ENCODE measurements at regions of chr3 and their contacts with region 1.

Region 1: DNA sequence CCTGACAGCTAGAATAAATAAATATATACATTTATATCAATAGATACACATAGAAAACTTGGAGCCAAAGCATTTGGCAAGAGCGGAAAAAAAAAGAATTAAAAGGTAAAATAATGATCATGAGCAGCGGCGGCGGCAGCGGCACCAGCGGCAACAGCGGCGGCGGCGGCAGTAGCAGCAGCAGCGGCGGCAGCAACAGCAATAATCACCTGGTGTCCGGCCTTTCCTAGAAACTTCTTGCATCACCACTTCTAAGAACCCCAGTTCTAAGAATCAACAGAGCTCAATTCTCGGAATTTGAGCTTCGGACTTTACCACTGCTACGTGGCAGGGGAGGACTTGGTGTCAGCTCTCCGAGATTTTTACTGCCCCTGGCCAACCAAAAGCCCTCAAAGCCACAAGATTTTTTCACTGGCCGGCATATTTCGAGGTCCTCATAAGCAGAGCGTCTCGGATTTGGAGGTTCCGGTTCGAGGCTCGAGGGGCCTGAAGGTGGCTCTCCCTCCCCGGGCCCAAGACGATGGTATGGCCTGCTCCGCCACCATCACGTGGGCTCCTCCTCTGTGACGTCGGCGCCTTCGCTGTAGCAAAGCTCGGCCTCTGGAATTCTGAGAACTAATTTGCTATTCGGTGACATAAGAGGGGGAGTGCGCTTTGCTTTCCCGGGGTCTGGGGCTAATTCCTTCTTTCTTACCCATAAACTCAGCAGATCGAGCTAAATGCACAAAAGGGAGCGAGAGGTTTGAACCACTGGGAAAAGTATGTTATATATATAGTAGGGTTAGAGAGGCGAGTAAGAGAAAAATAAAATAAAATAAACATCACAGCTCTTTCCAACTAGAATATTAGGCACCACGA is at the start of gene BCL6:
- DNase-seq: peak; percentile 98
- H3K4me3 ChIP-seq: peak within 1 kb of the TSS; percentile 67 to 98 (median 78)
- H3K27ac ChIP-seq: peak within 1 kb of the TSS; percentile 100
- H3K4me1 ChIP-seq: peaks cover 37% of the 10 kb centered on the region
- H3K27me3 ChIP-seq: no peaks in the 10 kb centered on the region
- CTCF ChIP-seq: peak; percentile 2 to 6
- total RNA-seq, gene BCL6: 14.0 to 26.8 TPM

Region 2: GRCh38 chr3:187807086-187807862 is 61.8 kb after region 1 on chr3:
- CTCF ChIA-PET with region 1: no interaction called
- dilution Hi-C with region 1: loop called (anchors 5 kb)
- in situ Hi-C with region 1: no loop called
- intact Hi-C with region 1: no loop called
- DNase-seq: peak; percentile 85
- H3K4me3 ChIP-seq: no peak overlapping the region
- H3K27ac ChIP-seq: no peak overlapping the region
- H3K4me1 ChIP-seq: peaks cover 43% of the 10 kb centered on the region
- H3K27me3 ChIP-seq: no peaks in the 10 kb centered on the region
- CTCF ChIP-seq: no peak

Region 3: GRCh38 chr3:188049606-188050530 is 304.4 kb after region 1 on chr3:
- CTCF ChIA-PET with region 1: no interaction called
- dilution Hi-C with region 1: loop called (anchors 25 kb)
- in situ Hi-C with region 1: loop called in 1 of 2 experiments (anchors 10 kb)
- intact Hi-C with region 1: no loop called
- DNase-seq: no peak
- H3K4me3 ChIP-seq: no peak overlapping the region
- H3K27ac ChIP-seq: no peak overlapping the region
- H3K4me1 ChIP-seq: peaks cover 19% of the 10 kb centered on the region
- H3K27me3 ChIP-seq: no peaks in the 10 kb centered on the region
- CTCF ChIP-seq: no peak

Region 4: DNA sequence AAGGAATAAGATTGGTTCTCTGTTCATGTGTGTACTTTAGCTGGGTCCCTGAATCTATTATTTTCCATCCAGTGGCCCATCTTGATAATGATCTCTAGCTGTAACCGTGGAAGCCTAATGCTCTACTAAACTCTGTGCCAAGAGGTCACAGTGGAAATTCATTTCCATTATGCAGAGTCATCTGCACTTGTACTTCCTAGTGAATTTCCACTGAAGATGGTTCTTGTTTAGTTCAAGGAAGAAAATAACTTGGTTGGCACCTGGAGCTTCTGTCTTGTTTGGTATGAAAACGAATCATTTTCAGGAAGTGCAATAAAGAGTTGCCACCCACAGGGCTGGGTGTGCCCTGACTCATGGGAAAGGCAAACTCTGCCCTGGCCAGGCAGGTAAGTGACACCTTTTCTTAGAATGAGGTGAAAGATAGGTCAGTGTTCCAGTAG is 418.8 kb after region 1 on chr3:
- CTCF ChIA-PET with region 1: no interaction called
- dilution Hi-C with region 1: loop called (anchors 25 kb)
- in situ Hi-C with region 1: loop called in 1 of 2 experiments (anchors 10 kb)
- intact Hi-C with region 1: no loop called
- DNase-seq: peak; percentile 65
- H3K4me3 ChIP-seq: no peak overlapping the region
- H3K27ac ChIP-seq: peak overlapping the region; percentile 28
- H3K4me1 ChIP-seq: peaks cover 11% of the 10 kb centered on the region
- H3K27me3 ChIP-seq: no peaks in the 10 kb centered on the region
- CTCF ChIP-seq: no peak

Region 5: GRCh38 chr3:188294823-188295487 is 549.5 kb after region 1 on chr3:
- CTCF ChIA-PET with region 1: no interaction called
- dilution Hi-C with region 1: loop called (anchors 10 kb)
- in situ Hi-C with region 1: loop called in 1 of 2 experiments (anchors 10 kb)
- intact Hi-C with region 1: loop called (anchors 1 kb)
- DNase-seq: peak; percentile 95
- H3K4me3 ChIP-seq: peak overlapping the region in 2 of 3 experiments; percentile 18 to 28
- H3K27ac ChIP-seq: peak overlapping the region; percentile 97
- H3K4me1 ChIP-seq: peaks cover 57% of the 10 kb centered on the region
- H3K27me3 ChIP-seq: no peaks in the 10 kb centered on the region
- CTCF ChIP-seq: no peak

Region 6: GRCh38 chr3:188578576-188579363 is 833.3 kb after region 1 on chr3:
- CTCF ChIA-PET with region 1: no interaction called
- dilution Hi-C with region 1: no loop called
- in situ Hi-C with region 1: loop called in 1 of 2 experiments (anchors 25 kb)
- intact Hi-C with region 1: no loop called
- DNase-seq: peak; percentile 38
- H3K4me3 ChIP-seq: no peak overlapping the region
- H3K27ac ChIP-seq: no peak overlapping the region
- H3K4me1 ChIP-seq: peaks cover 19% of the 10 kb centered on the region
- H3K27me3 ChIP-seq: no peaks in the 10 kb centered on the region
- CTCF ChIP-seq: no peak

Region 7: GRCh38 chr3:188830893-188831292 is 1085.5 kb after region 1 on chr3:
- CTCF ChIA-PET with region 1: no interaction called
- dilution Hi-C with region 1: no loop called
- in situ Hi-C with region 1: loop called (anchors 25 kb)
- intact Hi-C with region 1: loop called (anchors 2 kb)
- DNase-seq: no peak
- H3K4me3 ChIP-seq: no peak overlapping the region
- H3K27ac ChIP-seq: no peak overlapping the region
- H3K4me1 ChIP-seq: peaks cover 14% of the 10 kb centered on the region
- H3K27me3 ChIP-seq: no peaks in the 10 kb centered on the region
- CTCF ChIP-seq: peak; percentile 36 to 43

Measured in mammary epithelial cell (primary cell).